ENCODE measurements at regions of chr3 and their contacts with region 1.

Region 1: DNA sequence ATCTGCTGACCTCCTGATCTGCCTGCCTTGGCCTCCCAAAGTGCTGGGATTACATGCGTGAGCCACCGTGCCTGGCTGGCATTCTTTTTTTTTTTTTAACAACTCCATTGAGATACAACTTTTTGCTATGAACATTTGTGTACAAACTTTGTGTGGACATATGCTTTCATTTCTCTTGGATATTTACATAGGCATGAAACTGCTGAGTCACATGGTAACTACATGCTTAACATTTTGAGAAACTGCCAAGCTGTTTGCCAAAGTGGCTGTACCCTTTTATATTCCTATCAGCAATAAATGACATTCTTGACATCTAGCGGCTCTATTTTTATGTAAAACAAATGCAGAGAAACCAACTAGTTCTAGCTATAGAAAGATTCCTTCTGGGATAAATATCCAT is 8.7 kb upstream of the YEATS2 start:
- DNase-seq: no peak
- ATAC-seq: no peak

Region 2: GRCh38 chr3:183073839-183074238 is 615.0 kb before region 1 on chr3:
- intact Hi-C with region 1: no loop called
- DNase-seq: no peak
- ATAC-seq: no peak

Region 3: DNA sequence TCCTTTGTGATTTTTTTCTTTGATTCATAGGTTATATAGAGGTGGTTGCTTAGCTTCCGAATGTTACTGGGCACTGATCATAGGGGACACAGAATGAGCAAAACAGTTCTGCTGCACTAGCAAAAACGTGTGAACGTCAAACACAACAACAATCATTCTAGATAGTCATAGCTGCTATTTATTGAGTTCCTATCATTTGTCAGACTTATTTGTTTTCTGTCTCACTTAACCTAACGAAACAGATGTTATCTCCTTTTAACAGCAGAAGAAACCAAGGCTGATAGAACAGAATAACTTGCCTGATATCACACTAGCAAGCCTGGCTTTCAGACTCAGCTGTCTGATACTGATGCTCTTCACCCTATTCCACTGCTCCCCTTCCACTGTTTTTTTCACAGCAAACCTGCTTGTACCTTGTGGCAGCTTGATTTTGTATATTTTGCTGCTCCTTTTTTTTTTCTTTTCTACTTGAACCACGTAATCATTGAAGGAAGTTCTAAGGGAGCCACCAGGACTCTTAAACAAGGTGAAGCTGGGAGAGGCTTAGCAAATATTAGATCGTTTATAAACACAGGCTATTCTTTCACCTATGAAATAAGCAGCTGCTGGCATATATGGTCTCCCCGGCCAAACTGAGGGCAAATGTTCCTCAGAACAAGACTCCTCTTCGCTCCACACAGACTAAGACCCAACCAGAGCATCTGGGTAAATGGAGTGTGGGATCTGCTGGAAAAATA is 339.3 kb before region 1 on chr3:
- intact Hi-C with region 1: no loop called
- DNase-seq: no peak
- ATAC-seq: no peak

Region 4: GRCh38 chr3:183653209-183654064 is 35.4 kb before region 1 on chr3:
- intact Hi-C with region 1: loop called (anchors 5 kb)
- DNase-seq: no peak
- ATAC-seq: no peak